Activated CD4-positive, alpha-beta memory T cell treated with anti-CD3 and anti-CD28 coated beads for 36 hours (primary cell): ENCODE measurements at regions of chr14 and their contacts with region 1.

Region 1: GRCh38 chr14:53109105-53110041 is 43.8 kb downstream of the DDHD1 start:
- DNase-seq: peak; percentile 76
- H3K4me3 Mint-ChIP-seq: no peak overlapping the region
- H3K27ac Mint-ChIP-seq: no peak overlapping the region
- H3K4me1 Mint-ChIP-seq: peaks cover 23% of the 10 kb centered on the region
- H3K27me3 Mint-ChIP-seq: no peaks in the 10 kb centered on the region

Region 2: GRCh38 chr14:52918486-52918885 is 190.9 kb before region 1 on chr14:
- CTCF ChIA-PET with region 1: no interaction called
- POLR2A ChIA-PET with region 1: no interaction called
- intact Hi-C with region 1: loop called (anchors 1 kb)
- DNase-seq: peak; percentile 18
- H3K4me3 Mint-ChIP-seq: no peak overlapping the region
- H3K27ac Mint-ChIP-seq: peak overlapping the region; percentile 35
- H3K4me1 Mint-ChIP-seq: peaks cover 25% of the 10 kb centered on the region
- H3K27me3 Mint-ChIP-seq: no peaks in the 10 kb centered on the region

Region 3: DNA sequence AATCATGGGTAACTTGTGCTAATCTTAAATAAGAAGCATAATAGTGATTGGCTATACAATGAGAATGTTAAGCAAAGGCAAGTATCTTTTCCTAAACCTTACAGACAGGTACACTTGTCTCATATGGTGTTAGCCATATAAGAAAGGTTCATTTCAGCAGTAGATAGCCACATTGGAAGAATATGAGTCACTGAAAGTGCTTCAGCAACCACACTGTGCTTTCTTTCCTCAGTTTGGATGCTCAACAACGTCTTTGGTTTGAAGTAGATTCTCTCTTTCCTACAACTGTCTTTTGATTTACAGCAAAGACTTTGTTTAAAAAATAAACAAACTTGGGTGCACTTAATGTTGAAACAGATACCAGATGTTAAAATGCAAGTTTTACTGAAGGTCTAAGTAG is 34.9 kb after region 1 on chr14:
- CTCF ChIA-PET with region 1: interaction called, 3 read pairs
- POLR2A ChIA-PET with region 1: interaction called, 8 read pairs
- intact Hi-C with region 1: loop called (anchors 1 kb)
- DNase-seq: peak; percentile 26
- H3K4me3 Mint-ChIP-seq: no peak overlapping the region
- H3K27ac Mint-ChIP-seq: peak overlapping the region; percentile 54
- H3K4me1 Mint-ChIP-seq: peaks cover 70% of the 10 kb centered on the region
- H3K27me3 Mint-ChIP-seq: no peaks in the 10 kb centered on the region

Region 4: GRCh38 chr14:53180268-53181221 is 71.2 kb after region 1 on chr14:
- CTCF ChIA-PET with region 1: no interaction called
- POLR2A ChIA-PET with region 1: interaction called, 6 read pairs
- intact Hi-C with region 1: loop called (anchors 1 kb)
- DNase-seq: peak; percentile 75
- H3K4me3 Mint-ChIP-seq: peak overlapping the region; percentile 3
- H3K27ac Mint-ChIP-seq: peak overlapping the region; percentile 67
- H3K4me1 Mint-ChIP-seq: peaks cover 41% of the 10 kb centered on the region
- H3K27me3 Mint-ChIP-seq: no peaks in the 10 kb centered on the region

Region 5: DNA sequence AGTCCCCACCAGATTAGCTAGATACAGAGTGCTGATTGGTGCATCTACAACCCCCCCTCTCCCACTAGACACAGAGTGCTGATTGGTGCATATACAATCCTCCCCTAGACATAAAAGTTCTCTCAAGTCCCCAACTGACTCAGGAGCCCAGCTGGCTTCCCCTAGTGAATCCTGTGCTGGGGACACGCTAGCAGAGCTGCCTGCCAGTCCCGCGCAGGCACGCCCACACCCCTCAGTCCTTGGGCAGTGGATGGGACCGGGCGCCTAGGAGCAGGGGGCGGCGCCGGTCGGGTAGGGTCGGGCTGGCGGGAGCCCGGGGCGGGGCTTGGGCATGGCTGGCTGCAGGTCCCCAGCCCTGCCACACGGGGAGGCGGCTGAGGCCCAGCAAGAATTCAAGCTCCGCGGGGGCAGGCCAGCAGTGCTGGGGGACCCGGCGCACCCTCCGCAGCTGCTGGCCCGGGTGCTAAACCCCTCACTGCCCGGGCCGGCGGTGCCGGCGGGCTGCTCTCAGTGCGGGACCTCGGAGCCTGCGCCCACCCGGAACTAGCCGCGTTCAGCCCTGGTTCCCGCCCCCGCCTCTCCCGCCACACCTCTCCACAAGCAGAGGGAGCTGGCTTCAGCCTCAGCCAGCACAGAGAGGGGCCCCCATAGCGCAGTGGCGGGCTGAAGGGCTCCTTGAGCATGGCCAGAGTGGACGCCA is 108.1 kb after region 1 on chr14:
- CTCF ChIA-PET with region 1: interaction called, 3 read pairs
- POLR2A ChIA-PET with region 1: no interaction called
- intact Hi-C with region 1: loop called (anchors 1 kb)
- DNase-seq: peak; percentile 88
- H3K4me3 Mint-ChIP-seq: peak overlapping the region; percentile 80
- H3K27ac Mint-ChIP-seq: peak overlapping the region; percentile 52
- H3K4me1 Mint-ChIP-seq: peaks cover 5% of the 10 kb centered on the region
- H3K27me3 Mint-ChIP-seq: no peaks in the 10 kb centered on the region